ENCODE measurements at regions of chr18 and their contacts with region 1.

Region 1: DNA sequence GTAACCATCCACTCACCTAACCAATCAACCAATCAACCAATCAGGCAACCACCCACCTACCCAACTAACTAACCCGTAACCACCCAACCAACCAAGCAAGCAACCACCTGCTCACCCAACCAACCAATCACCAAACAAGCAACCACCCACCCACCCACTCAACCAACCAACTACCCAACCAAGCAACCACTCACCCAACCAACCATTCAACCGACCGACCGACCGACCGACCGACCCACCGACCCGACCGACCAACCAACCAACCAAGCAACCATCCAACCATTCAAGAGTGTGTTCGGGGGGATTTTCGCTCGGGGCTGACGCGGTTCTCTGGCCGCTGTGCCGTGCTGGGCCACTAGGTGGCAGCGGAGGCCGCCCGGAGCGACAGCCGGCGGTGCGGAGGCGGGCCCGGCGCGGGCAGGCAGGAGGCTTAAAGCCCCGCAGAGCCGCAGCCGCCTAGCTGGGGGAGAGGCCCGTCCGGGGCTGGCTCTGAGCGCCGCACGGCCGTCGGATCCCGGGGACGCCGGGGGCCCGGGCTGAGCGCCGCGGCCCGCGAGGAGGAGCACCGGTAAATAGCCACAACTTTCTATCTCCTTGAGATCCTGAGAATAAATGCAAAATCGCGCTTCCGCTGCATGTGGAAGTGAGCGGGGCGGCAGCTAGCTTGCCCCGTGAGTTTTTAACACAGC is at the start of gene MC5R:
- DNase-seq: no peak
- H3K4me3 ChIP-seq: peak within 1 kb of the TSS in 3 of 4 donors; percentile 30 to 50 (median 43)
- H3K27ac ChIP-seq: no peak within 1 kb of the TSS
- H3K4me1 ChIP-seq: peaks cover 0 to 5% (median 2%) of the 10 kb centered on the region in 4 donors
- H3K27me3 ChIP-seq: peaks cover 0 to 24% (median 0%) of the 10 kb centered on the region in 3 donors
- CTCF ChIP-seq: peak; percentile 64 to 91 (median 78)
- EP300 ChIP-seq: no peak
- POLR2A ChIP-seq: no peak
- total RNA-seq, gene MC5R: not detected

Region 2: DNA sequence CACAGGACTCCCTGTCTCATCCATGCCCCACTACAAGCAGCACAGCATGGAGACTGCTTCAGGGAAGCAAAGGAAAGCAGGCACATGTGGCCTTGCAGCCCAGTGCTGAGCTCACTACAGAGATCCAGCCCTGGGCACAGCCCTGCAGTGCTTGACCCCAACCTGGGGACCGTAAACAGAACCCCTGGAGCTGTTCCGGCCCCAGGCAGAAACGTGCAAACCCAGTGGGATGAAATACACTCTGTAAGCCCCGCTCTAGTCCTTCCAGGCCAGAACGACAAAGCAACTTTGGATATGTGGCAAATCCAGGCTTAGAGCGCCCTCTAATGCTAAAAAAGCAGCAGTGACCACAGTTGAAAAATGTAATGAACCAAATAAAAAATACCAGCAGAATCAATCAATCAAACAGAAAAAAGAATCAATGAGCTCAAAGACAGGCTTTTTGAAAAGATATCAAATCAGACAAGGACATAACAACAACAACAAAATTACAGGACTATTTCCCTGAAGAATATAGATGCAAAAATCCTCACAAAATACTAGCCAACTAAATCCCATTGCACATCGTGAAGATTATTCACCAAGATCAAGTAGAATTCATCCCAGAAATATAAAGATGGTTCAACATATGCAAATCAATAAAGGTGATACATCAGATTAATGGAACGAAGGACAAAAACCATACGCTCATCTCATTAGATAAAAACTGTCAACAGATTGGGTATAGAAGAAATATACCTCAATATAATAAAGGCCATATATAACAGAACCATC is 262.8 kb after region 1 on chr18:
- intact Hi-C with region 1: loop called (anchors 10 kb)
- DNase-seq: no peak
- H3K4me3 ChIP-seq: no peak overlapping the region
- H3K27ac ChIP-seq: no peak overlapping the region
- H3K4me1 ChIP-seq: no peaks in the 10 kb centered on the region
- H3K27me3 ChIP-seq: no peaks in the 10 kb centered on the region
- CTCF ChIP-seq: peak in 3 of 4 experiments; percentile 14 to 45 (median 41)
- EP300 ChIP-seq: no peak
- POLR2A ChIP-seq: no peak